ENCODE measurements at regions of chr19 and their contacts with region 1.

Region 1: GRCh38 chr19:54023191-54023590 is 31.8 kb downstream of the CACNG6 start:
- DNase-seq: no peak
- ATAC-seq: no peak

Region 2: GRCh38 chr19:53792721-53793433 is 230.3 kb before region 1 on chr19:
- intact Hi-C with region 1: loop called in 1 of 2 experiments (anchors 5 kb)
- DNase-seq: peak; percentile 87
- ATAC-seq: peak; percentile 98

Region 3: GRCh38 chr19:54102421-54103169 is 79.4 kb after region 1 on chr19 and contains the start of gene NDUFA3:
- intact Hi-C with region 1: no loop called
- DNase-seq: peak; percentile 99
- ATAC-seq: peak; percentile 99 to 100
- total RNA-seq, gene NDUFA3: 272 to 373 TPM

Region 4: GRCh38 chr19:54231077-54231931 is 208.1 kb after region 1 on chr19:
- intact Hi-C with region 1: no loop called
- DNase-seq: peak; percentile 93
- ATAC-seq: peak; percentile 89 to 95

Region 5: GRCh38 chr19:55703790-55704215 is 1680.6 kb after region 1 on chr19:
- intact Hi-C with region 1: no loop called
- DNase-seq: peak; percentile 55
- ATAC-seq: peak; percentile 57 to 64

Measured in left cardiac atrium (tissue), 4 donors.